ENCODE measurements at regions of chr6 and their contacts with region 1.

Region 1: DNA sequence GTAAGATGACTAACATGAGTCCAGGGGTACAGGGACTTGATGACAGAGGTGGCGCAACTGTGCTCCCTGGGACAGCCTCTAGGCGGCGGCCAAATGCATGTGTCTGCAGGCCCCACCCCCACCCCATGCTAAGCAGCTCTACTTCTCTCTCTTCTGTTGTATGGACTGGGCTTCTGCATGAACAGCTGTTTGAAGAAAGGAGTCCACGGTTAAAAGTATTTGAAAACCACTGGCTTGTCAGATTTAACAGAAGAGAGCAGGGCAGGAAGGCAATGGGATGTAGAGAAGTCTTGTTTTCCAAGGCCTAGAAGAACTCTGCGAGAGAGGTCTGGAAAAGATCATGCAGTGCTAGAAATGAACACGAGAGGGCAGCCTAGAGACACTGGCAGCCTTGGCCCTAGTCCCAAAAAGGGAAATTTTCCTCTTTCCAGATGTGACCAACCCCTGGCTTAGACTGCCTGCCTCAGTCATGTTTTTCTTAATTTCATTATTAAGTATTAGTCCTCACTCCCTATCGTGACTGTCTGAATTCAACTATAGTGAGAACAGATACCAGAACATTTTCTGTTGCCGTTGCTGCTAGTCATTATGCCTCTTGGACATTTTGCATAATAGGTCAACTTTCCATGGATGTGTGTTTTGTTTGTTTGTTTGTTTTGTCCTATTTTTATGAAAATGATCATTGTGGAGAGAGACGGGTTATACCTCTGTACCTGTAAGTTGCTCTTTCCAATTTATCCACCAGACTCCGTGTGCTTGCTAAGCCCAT is 265.0 kb downstream of the ADGRG6 start:
- DNase-seq: peak; percentile 11
- ATAC-seq: peak; percentile 81
- H3K4me3 ChIP-seq: no peak overlapping the region
- H3K27ac ChIP-seq: no peak overlapping the region
- H3K4me1 ChIP-seq: no peaks in the 10 kb centered on the region
- H3K27me3 ChIP-seq: no peaks in the 10 kb centered on the region
- CTCF ChIP-seq: peak; percentile 85 to 92 (median 91)
- EP300 ChIP-seq: no peak
- POLR2A ChIP-seq: no peak
- RAD21 ChIP-seq: peak; percentile 83

Region 2: DNA sequence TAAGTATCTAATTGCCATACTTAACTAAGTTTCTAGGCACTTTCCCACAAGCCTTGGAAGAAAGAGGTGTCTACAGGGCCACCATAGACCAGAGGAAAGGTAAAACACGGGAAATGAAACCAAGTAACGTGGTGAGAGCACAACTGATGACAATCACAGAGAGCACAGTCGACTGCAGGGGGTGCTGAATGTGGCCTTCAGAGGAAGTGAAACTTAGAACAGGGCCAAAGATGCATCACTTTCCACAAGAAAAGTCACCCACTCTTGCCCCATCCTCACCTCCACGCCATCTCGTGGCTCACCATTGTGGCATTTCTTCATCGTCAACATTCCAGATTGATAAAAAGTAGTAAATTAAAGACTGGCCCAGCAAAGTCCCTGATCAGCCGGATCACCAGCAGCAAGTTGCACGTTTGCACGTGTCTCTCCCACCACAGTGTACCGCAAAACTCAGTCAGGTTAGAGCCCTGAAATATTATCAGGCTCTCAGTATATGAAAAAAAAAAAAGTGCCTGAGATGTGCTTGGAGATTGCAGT is 346.8 kb after region 1 on chr6:
- CTCF ChIA-PET with region 1: no interaction called
- POLR2A ChIA-PET with region 1: no interaction called
- RAD21 ChIA-PET with region 1: no interaction called
- SMC1A ChIA-PET with region 1: no interaction called
- in situ Hi-C with region 1: no loop called
- intact Hi-C with region 1: loop called (anchors 10 kb)
- DNase-seq: peak; percentile 94
- ATAC-seq: peak; percentile 89
- H3K4me3 ChIP-seq: peak overlapping the region; percentile 27
- H3K27ac ChIP-seq: peak overlapping the region; percentile 95
- H3K4me1 ChIP-seq: peaks cover 32% of the 10 kb centered on the region
- H3K27me3 ChIP-seq: no peaks in the 10 kb centered on the region
- CTCF ChIP-seq: peak; percentile 11 to 27 (median 26); a peak in 3 of 6 replicates
- EP300 ChIP-seq: peak; percentile 72 to 97; a peak in 3 of 4 replicates
- POLR2A ChIP-seq: peak; percentile 43; the same call in 1 of the 2 replicates
- RAD21 ChIP-seq: peak; percentile 53

Region 3: DNA sequence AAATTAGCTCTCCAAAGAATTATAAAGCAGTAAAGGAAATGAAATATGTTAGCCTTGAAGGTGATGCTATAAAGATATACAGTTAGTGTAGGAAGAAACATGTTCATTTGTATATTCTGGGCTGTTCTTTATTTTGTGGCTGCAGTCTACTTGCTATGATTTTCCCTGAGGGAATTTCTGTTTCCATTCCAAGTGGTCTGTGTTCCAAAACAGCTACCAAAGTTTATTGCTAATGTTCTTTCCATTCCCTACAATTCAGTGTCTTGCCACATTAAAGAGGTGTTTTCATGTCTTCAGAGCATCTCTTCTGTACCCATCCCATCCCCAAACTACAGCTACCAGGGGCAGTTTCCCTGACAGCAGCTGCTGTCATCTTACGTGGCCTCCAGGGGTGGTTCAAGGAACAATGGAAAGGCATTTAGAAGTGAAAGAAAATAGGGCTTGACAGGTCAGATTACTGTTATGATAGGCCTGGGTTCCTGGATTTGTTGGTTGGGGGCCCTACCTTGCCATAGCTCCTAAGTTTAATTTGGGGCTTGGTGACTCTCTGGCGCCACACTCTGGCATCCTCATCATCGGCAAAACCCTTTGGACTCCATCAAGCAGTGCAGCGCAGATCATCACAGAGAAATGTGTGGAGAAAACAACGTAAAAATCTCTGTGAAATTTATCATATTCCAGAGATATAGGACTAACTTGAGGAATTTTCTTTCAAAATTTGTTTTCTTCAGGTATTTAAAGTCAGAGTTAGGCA is 460.1 kb after region 1 on chr6:
- CTCF ChIA-PET with region 1: interaction called, 7 read pairs
- POLR2A ChIA-PET with region 1: no interaction called
- RAD21 ChIA-PET with region 1: no interaction called
- SMC1A ChIA-PET with region 1: interaction called, 12 read pairs
- in situ Hi-C with region 1: no loop called
- intact Hi-C with region 1: no loop called
- DNase-seq: no peak
- ATAC-seq: peak; percentile 76
- H3K4me3 ChIP-seq: no peak overlapping the region
- H3K27ac ChIP-seq: no peak overlapping the region
- H3K4me1 ChIP-seq: no peaks in the 10 kb centered on the region
- H3K27me3 ChIP-seq: no peaks in the 10 kb centered on the region
- CTCF ChIP-seq: peak; percentile 50 to 54 (median 50); a peak in 5 of 6 replicates
- EP300 ChIP-seq: no peak
- POLR2A ChIP-seq: no peak
- RAD21 ChIP-seq: peak; percentile 60

Region 4: DNA sequence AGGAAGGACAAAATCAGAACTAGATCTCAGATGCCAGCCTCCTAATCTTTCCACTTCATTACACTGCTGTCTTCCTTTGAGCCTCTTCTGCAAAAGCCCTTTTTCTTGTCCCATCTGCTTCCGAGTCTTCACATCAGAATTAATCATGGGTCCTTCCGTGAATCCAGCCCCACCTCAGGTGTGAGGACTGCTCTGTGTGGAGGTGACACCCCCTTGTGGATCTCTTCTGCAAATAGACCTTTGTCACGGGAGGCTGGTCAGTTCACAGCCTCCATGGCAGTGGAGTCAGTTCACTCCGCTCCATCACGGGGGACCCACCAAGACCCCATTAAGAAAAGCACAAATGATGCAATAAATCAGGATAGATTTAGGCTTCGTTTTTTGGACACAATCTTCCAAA is 712.6 kb after region 1 on chr6:
- CTCF ChIA-PET with region 1: interaction called, 5 read pairs
- POLR2A ChIA-PET with region 1: no interaction called
- RAD21 ChIA-PET with region 1: no interaction called
- SMC1A ChIA-PET with region 1: interaction called, 3 read pairs
- in situ Hi-C with region 1: no loop called
- intact Hi-C with region 1: loop called (anchors 2 kb)
- DNase-seq: no peak
- ATAC-seq: peak; percentile 83
- H3K4me3 ChIP-seq: no peak overlapping the region
- H3K27ac ChIP-seq: no peak overlapping the region
- H3K4me1 ChIP-seq: peaks cover 7% of the 10 kb centered on the region; the same call in 1 of the 2 replicates
- H3K27me3 ChIP-seq: no peaks in the 10 kb centered on the region
- CTCF ChIP-seq: peak; percentile 37 to 58 (median 52); a peak in 4 of 6 replicates
- EP300 ChIP-seq: no peak
- POLR2A ChIP-seq: no peak
- RAD21 ChIP-seq: peak; percentile 69

Region 5: DNA sequence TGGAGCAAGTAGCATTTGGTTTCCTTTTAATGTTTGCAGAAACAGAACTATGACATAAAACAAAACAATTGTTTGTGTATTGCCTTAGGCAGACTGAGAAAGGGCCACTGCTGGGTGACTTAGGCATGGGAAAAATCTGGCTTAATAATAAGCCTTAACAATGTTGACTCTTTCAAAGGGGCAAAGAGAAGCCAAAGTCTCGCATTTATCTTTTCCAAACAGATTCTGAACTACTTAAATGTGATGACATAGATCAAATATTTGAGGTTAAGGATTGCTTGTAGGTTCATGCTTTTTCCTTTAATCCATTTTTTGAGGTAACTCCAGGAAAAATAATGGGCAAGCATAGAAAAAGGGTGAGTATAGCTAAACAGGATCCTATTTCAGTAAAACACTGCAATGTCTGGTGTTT is 844.1 kb after region 1 on chr6:
- CTCF ChIA-PET with region 1: no interaction called
- POLR2A ChIA-PET with region 1: no interaction called
- RAD21 ChIA-PET with region 1: no interaction called
- SMC1A ChIA-PET with region 1: no interaction called
- in situ Hi-C with region 1: loop called (anchors 10 kb)
- intact Hi-C with region 1: no loop called
- DNase-seq: no peak
- ATAC-seq: no peak
- H3K4me3 ChIP-seq: no peak overlapping the region
- H3K27ac ChIP-seq: no peak overlapping the region
- H3K4me1 ChIP-seq: peaks cover 11% of the 10 kb centered on the region
- H3K27me3 ChIP-seq: no peaks in the 10 kb centered on the region
- CTCF ChIP-seq: no peak
- EP300 ChIP-seq: no peak
- POLR2A ChIP-seq: no peak
- RAD21 ChIP-seq: no peak

Measured in GM12878 (cell line).